Tibial artery (tissue), 4 donors: ENCODE measurements at regions of chr21 and their contacts with region 1.

Region 1: GRCh38 chr21:29298348-29299045 is at the start of gene BACH1:
- DNase-seq: peak; percentile 86 to 93
- H3K4me3 ChIP-seq: peak within 1 kb of the TSS; percentile 83 to 86
- H3K27ac ChIP-seq: peak within 1 kb of the TSS; percentile 84 to 96
- H3K4me1 ChIP-seq: peaks cover 0 to 44% (median 23%) of the 10 kb centered on the region in 4 donors
- H3K27me3 ChIP-seq: no peaks in the 10 kb centered on the region
- CTCF ChIP-seq: peak; percentile 20 to 32

Region 2: GRCh38 chr21:29085106-29085752 is 213.3 kb before region 1 on chr21:
- intact Hi-C with region 1: loop called (anchors 5 kb)
- DNase-seq: no peak
- H3K4me3 ChIP-seq: no peak overlapping the region
- H3K27ac ChIP-seq: peak overlapping the region; percentile 20 to 52
- H3K4me1 ChIP-seq: peaks cover 0 to 50% (median 4%) of the 10 kb centered on the region in 4 donors
- H3K27me3 ChIP-seq: no peaks in the 10 kb centered on the region
- CTCF ChIP-seq: no peak

Region 3: GRCh38 chr21:29164325-29164942 is 134.1 kb before region 1 on chr21:
- intact Hi-C with region 1: loop called (anchors 10 kb)
- DNase-seq: no peak
- H3K4me3 ChIP-seq: no peak overlapping the region
- H3K27ac ChIP-seq: peak overlapping the region; percentile 71 to 84
- H3K4me1 ChIP-seq: peaks cover 0 to 30% (median 12%) of the 10 kb centered on the region in 4 donors
- H3K27me3 ChIP-seq: no peaks in the 10 kb centered on the region
- CTCF ChIP-seq: peak; percentile 76 to 77

Region 4: GRCh38 chr21:29351691-29352090 is 53.2 kb after region 1 on chr21:
- intact Hi-C with region 1: loop called (anchors 5 kb)
- DNase-seq: no peak
- H3K4me3 ChIP-seq: no peak overlapping the region
- H3K27ac ChIP-seq: peak overlapping the region in 1 of 2 donors; percentile 12
- H3K4me1 ChIP-seq: peaks cover 0 to 33% (median 11%) of the 10 kb centered on the region in 4 donors
- H3K27me3 ChIP-seq: no peaks in the 10 kb centered on the region
- CTCF ChIP-seq: no peak